ENCODE measurements at regions of chr9 and their contacts with region 1.

Region 1: GRCh38 chr9:27726244-27727081 is 153.2 kb upstream of the C9orf72 start:
- DNase-seq: peak in 4 of 5 donors; percentile 19 to 45 (median 32)
- ATAC-seq: peak in 3 of 4 donors; percentile 57 to 75 (median 59)
- H3K4me3 ChIP-seq: no peak overlapping the region
- H3K27ac ChIP-seq: no peak overlapping the region
- H3K4me1 ChIP-seq: no peaks in the 10 kb centered on the region
- H3K27me3 ChIP-seq: peaks cover 0 to 3% (median 0%) of the 10 kb centered on the region in 9 donors
- CTCF ChIP-seq: peak; percentile 52 to 82 (median 66)
- POLR2A ChIP-seq: no peak

Region 2: DNA sequence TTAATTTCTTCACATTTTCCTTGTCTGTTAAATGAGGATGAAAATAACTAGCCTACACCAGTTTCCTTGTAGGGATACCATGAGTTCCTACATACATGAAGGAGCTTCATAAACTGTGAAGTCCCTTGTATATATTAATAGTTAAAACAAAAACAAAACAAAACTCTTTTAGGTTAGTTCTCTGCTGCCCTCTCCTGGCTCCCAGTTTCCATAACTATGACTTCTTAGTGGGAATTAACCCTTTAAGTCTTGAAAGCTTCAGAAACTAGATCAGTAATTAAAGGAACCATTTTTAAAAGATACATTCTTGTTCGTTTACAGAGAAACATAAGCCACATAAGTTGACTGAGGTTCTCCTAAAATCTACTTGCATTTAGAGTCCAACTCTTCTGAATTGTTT is 346.8 kb after region 1 on chr9:
- intact Hi-C with region 1: loop called (anchors 5 to 10 kb)
- DNase-seq: peak in 2 of 5 donors; percentile 6 to 16
- ATAC-seq: no peak
- H3K4me3 ChIP-seq: no peak overlapping the region
- H3K27ac ChIP-seq: no peak overlapping the region
- H3K4me1 ChIP-seq: no peaks in the 10 kb centered on the region
- H3K27me3 ChIP-seq: no peaks in the 10 kb centered on the region
- CTCF ChIP-seq: peak; percentile 10 to 55 (median 40)
- POLR2A ChIP-seq: no peak